ENCODE measurements at regions of chr5 and their contacts with region 1.

Region 1: DNA sequence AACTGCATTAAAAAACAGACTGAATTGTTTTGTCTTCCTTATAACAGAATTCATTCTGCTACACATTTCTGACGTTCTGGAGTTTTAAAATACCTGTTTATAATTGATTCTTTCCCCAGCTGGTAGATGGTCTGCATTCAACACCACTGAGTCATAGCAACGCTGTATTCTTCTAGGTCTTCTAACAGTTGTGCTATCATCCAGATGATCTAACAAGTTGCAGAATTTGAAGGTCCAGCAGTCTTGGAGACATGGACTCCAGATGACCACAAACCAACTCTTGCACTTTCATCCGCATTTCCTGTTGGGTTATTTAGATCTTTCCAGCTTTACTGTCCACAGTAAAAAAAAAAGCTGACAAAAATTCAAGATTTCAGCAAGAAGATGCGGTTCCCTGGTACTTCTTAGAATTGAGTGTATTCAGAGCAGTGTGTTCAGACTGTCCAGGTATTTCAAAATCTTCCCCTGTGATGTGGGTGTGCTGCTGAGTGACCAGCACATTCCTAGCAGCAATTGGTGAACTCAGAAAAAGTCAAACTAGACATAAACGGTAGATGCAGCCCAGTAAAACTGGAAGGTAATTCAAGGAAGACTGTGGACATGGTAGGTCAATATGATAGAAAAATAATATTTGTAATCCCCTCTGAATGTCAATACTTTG is 50.2 kb downstream of the CSNK1A1 start:
- DNase-seq: no peak
- ATAC-seq: no peak
- H3K4me3 ChIP-seq: no peak overlapping the region
- H3K27ac ChIP-seq: peak overlapping the region in 3 of 4 donors; percentile 22 to 41 (median 35)
- H3K4me1 ChIP-seq: no peaks in the 10 kb centered on the region
- H3K27me3 ChIP-seq: no peaks in the 10 kb centered on the region
- CTCF ChIP-seq: no peak
- POLR2A ChIP-seq: no peak

Region 2: DNA sequence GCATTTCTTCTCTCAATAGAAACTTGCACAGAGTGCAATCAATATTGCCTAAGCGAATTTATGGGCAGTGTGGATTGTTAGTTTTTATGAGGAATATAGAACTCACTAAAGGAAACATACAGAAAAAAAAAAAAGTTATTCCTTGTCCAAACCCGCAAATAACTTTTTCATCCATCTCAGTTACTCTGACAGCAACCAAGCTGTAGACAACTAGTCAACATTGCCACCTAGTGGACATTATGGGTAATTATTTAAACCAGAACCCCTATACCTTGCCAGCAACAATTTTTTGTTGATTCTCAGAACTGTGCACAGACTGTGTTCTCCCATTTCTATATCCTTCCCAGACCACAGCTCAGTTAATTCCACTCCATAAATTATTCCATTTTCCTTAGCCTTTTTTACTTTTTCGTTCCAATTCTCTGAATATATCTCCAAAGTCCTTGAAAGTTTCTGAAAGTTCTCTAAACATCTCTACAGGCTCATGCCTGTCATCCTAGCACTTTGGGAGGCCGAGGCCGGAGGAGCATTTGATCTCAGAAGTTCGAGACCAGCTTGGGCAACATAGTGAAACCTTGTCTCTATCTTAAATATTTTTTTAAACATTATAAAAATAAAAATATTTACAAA is 232.0 kb before region 1 on chr5:
- in situ Hi-C with region 1: no loop called
- intact Hi-C with region 1: no loop called
- DNase-seq: no peak
- ATAC-seq: no peak
- H3K4me3 ChIP-seq: no peak overlapping the region
- H3K27ac ChIP-seq: no peak overlapping the region
- H3K4me1 ChIP-seq: peaks cover 12 to 20% of the 10 kb centered on the region in 2 donors
- H3K27me3 ChIP-seq: no peaks in the 10 kb centered on the region
- CTCF ChIP-seq: peak; percentile 70 to 88 (median 75)
- POLR2A ChIP-seq: no peak

Region 3: DNA sequence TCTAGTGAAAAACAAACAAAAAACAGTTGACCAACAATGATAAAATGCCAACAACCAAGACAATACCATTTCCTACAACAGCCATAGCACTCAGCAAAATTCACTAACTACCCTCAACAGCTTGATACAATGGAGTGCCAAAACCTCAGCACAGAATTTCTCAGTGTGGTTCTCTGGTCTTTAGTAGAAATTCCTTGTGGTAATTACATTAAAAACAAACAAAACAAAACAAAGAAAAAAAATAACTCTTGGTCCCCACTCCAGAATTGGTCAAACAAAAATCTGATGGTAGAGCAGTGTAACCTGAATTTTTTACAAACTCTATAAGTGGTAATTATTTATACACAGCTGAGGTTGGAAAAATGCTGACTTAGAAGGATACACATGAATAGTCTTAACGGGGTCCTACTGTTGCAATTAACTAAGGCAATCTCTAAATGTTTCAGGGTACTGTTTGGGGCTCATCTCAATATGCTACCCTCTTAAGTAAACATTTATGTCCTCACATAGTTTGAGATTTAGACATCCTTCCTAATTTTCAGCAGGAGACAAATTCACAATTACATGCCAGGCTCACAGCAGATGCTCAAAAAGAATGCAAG is 36.4 kb after region 1 on chr5:
- in situ Hi-C with region 1: no loop called
- intact Hi-C with region 1: loop called (anchors 5 kb)
- DNase-seq: no peak
- ATAC-seq: no peak
- H3K4me3 ChIP-seq: no peak overlapping the region
- H3K27ac ChIP-seq: peak overlapping the region in 1 of 4 donors; percentile 23
- H3K4me1 ChIP-seq: peaks cover 73 to 86% of the 10 kb centered on the region in 2 donors
- H3K27me3 ChIP-seq: no peaks in the 10 kb centered on the region
- CTCF ChIP-seq: no peak
- POLR2A ChIP-seq: no peak

Measured in gastrocnemius medialis (tissue), 4 donors.